ENCODE measurements at regions of chr3 and their contacts with region 1.

Region 1: GRCh38 chr3:129383292-129383860 is 45.1 kb downstream of the EFCAB12 start:
- DNase-seq: peak; percentile 42
- ATAC-seq: peak; percentile 96
- H3K4me3 ChIP-seq: no peak overlapping the region
- H3K27ac ChIP-seq: no peak overlapping the region
- H3K4me1 ChIP-seq: peaks cover 3% of the 10 kb centered on the region; the same call in 1 of the 2 replicates
- H3K27me3 ChIP-seq: no peaks in the 10 kb centered on the region
- CTCF ChIP-seq: peak; percentile 97

Region 2: GRCh38 chr3:129371041-129371826 is 12.1 kb before region 1 on chr3:
- CTCF ChIA-PET with region 1: interaction called, 12 read pairs
- POLR2A ChIA-PET with region 1: no interaction called
- in situ Hi-C with region 1: no loop called
- intact Hi-C with region 1: no loop called
- DNase-seq: no peak
- ATAC-seq: peak; percentile 41; the same call in 1 of the 2 replicates
- H3K4me3 ChIP-seq: no peak overlapping the region
- H3K27ac ChIP-seq: no peak overlapping the region
- H3K4me1 ChIP-seq: no peaks in the 10 kb centered on the region
- H3K27me3 ChIP-seq: no peaks in the 10 kb centered on the region
- CTCF ChIP-seq: no peak

Region 3: DNA sequence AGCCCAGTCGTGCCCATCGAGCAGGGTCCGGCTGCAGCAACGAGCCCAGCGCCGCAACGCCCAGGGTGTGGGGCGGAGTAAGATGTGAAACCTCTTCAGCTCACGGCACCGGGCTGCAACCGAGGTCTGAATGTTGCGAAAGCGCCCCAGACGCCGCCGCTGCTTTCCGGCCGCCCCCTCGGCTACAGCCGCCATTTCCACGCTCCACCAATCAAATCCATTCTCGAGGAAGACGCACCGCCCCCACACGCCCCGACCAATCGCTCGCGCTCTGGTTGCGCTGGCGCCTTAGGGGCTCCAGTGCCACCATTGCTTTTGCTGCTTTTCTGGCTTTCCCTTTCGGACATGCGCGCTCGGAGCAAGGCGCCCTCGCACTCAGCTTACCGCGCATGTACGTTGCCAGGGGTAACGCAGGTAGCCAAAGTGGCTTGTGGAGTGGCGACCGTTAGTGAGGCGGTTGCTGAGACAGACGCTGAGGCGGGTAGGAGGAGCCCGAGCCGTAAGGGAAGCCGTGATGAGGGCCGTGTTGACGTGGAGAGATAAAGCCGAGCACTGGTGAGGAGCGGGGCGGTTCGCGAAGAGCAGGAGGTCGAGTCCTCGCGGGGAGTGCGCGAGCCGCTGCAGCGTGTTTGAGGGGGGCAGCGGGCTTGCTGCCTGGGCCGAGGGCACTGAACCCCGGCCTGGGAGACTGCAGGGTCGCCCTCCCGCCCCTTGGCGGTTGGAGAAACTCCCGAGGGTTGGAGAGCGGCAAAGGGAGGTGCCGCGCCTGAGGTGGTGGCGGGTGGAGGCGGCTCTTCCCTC is 56.6 kb after region 1 on chr3 and contains the starts of genes IFT122 and MBD4:
- CTCF ChIA-PET with region 1: interaction called, 10 read pairs
- POLR2A ChIA-PET with region 1: no interaction called
- in situ Hi-C with region 1: no loop called
- intact Hi-C with region 1: no loop called
- DNase-seq: peak; percentile 98
- ATAC-seq: peak; percentile 96
- H3K4me3 ChIP-seq: peak within 1 kb of the TSS; percentile 67 to 97
- H3K27ac ChIP-seq: peak within 1 kb of the TSS; percentile 98
- H3K4me1 ChIP-seq: peaks cover 34% of the 10 kb centered on the region
- H3K27me3 ChIP-seq: no peaks in the 10 kb centered on the region
- CTCF ChIP-seq: no peak
- total RNA-seq, gene IFT122: 52.4 TPM
- total RNA-seq, gene MBD4: 44.7 TPM

Region 4: GRCh38 chr3:129606636-129607390 is 223.4 kb after region 1 on chr3 and contains the start of gene PLXND1:
- CTCF ChIA-PET with region 1: no interaction called
- POLR2A ChIA-PET with region 1: no interaction called
- in situ Hi-C with region 1: no loop called
- intact Hi-C with region 1: no loop called
- DNase-seq: no peak
- ATAC-seq: peak; percentile 75
- H3K4me3 ChIP-seq: peak within 1 kb of the TSS; percentile 57 to 92
- H3K27ac ChIP-seq: peak within 1 kb of the TSS; percentile 85
- H3K4me1 ChIP-seq: peaks cover 51% of the 10 kb centered on the region
- H3K27me3 ChIP-seq: no peaks in the 10 kb centered on the region
- CTCF ChIP-seq: no peak
- total RNA-seq, gene PLXND1: 248 TPM

Region 5: DNA sequence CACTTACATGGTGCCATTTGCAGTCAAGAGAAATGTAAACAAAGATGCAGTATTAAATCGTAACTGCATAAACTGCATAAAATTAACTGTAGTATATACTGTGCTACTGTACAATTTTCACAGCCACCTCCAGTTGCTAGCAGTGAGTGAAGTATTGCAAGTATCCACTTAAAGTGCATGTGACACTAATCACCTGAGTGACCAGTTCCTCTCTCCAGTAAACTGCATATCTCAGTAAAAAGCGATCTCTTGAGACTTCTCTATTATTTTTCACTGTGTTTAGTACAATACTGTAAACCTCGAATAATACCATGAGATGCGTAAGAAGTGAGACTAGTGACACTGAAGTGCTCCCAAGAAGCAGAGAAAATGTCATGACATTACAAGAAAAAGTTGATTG is 334.8 kb after region 1 on chr3:
- CTCF ChIA-PET with region 1: interaction called, 10 read pairs
- POLR2A ChIA-PET with region 1: no interaction called
- in situ Hi-C with region 1: no loop called
- intact Hi-C with region 1: no loop called
- DNase-seq: no peak
- ATAC-seq: no peak
- H3K4me3 ChIP-seq: no peak overlapping the region
- H3K27ac ChIP-seq: no peak overlapping the region
- H3K4me1 ChIP-seq: peaks cover 2% of the 10 kb centered on the region
- H3K27me3 ChIP-seq: no peaks in the 10 kb centered on the region
- CTCF ChIP-seq: no peak

Measured in Panc1 (cell line).